ENCODE measurements at regions of chr4 and their contacts with region 1.

Region 1: DNA sequence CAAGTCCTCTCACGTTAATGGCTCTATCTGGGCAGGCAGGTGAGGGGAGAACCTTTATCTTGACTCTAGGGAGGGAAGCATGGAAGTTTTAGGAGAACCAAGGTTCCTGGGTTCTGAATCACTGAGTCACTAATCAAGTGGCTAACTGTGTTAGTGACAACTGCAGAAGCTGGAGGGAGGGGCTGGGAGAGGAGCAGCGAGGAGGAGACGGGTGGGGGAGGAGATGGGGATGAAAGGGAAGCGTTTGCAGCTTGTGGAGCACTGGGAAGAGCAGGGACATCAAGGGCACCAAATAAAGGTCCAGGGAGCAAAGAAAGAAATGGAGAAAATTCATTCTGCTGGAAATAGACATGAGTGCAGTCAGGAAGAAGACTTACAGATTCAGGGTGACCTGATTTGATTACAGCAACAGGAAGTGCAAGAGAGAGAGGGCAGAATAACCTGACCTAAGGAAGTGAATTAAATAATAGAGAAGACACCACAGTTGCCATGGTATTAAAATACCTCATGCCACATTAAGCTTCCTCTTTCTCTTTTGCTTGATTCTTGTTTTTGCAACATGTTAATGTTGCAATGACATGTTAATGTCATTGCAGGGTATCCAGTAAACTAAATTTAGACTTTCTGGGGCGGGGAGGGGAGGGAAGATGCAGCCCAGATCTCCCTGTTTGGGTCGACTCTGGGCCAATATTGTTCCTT is 4.5 kb upstream of the SETD7 start:
- DNase-seq: peak in 4 of 14 experiments; percentile 9 to 84 (median 76)
- ATAC-seq: peak; percentile 35
- H3K4me3 ChIP-seq: peak overlapping the region; percentile 4
- H3K4me3 Mint-ChIP-seq: peak overlapping the region; percentile 78
- H3K27ac ChIP-seq: peak overlapping the region in 1 of 2 donors; percentile 65
- H3K27ac Mint-ChIP-seq: peak overlapping the region; percentile 99
- H3K4me1 ChIP-seq: peaks cover 36% of the 10 kb centered on the region
- H3K4me1 Mint-ChIP-seq: peaks cover 42% of the 10 kb centered on the region
- H3K27me3 ChIP-seq: no peaks in the 10 kb centered on the region
- H3K27me3 Mint-ChIP-seq: peaks cover 9% of the 10 kb centered on the region
- CTCF ChIP-seq: no peak

Region 2: DNA sequence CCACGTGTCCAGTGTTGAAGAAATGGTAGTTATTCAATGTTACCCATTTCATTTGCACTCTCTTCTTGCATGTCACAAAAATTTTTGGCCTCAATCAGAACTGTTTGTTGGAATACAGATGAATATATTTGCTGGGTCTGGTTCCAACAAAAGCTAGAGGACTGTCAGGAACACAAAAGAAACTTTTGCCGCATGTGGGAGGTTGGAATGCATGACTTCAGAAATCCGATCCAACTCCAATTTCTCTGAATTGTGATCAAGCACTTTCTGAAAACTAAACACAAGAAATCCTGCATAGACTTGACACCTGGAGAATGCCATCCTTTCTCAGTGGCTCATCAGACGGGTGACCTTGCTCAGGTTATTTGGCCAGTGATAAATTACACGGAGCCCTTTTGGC is 19.9 kb before region 1 on chr4:
- CTCF ChIA-PET with region 1: no interaction called
- POLR2A ChIA-PET with region 1: interaction called, 5 read pairs
- intact Hi-C with region 1: loop called in 1 of 2 experiments (anchors 1 kb)
- DNase-seq: no peak
- ATAC-seq: no peak
- H3K4me3 ChIP-seq: no peak overlapping the region
- H3K4me3 Mint-ChIP-seq: no peak overlapping the region
- H3K27ac ChIP-seq: no peak overlapping the region
- H3K27ac Mint-ChIP-seq: no peak overlapping the region
- H3K4me1 ChIP-seq: no peaks in the 10 kb centered on the region
- H3K4me1 Mint-ChIP-seq: no peaks in the 10 kb centered on the region
- H3K27me3 ChIP-seq: no peaks in the 10 kb centered on the region
- H3K27me3 Mint-ChIP-seq: no peaks in the 10 kb centered on the region
- CTCF ChIP-seq: no peak

Region 3: GRCh38 chr4:140485939-140486338 is 925.4 kb after region 1 on chr4:
- CTCF ChIA-PET with region 1: no interaction called
- POLR2A ChIA-PET with region 1: no interaction called
- intact Hi-C with region 1: no loop called
- DNase-seq: no peak
- ATAC-seq: no peak
- H3K4me3 ChIP-seq: no peak overlapping the region
- H3K4me3 Mint-ChIP-seq: no peak overlapping the region
- H3K27ac ChIP-seq: no peak overlapping the region
- H3K27ac Mint-ChIP-seq: no peak overlapping the region
- H3K4me1 ChIP-seq: no peaks in the 10 kb centered on the region
- H3K4me1 Mint-ChIP-seq: no peaks in the 10 kb centered on the region
- H3K27me3 ChIP-seq: peaks cover 0 to 4% of the 10 kb centered on the region in 2 experiments
- H3K27me3 Mint-ChIP-seq: peaks cover 17% of the 10 kb centered on the region
- CTCF ChIP-seq: no peak

Measured in CD4-positive, alpha-beta T cell (primary cell).